ENCODE measurements at regions of chr12 and their contacts with region 1.

Region 1: DNA sequence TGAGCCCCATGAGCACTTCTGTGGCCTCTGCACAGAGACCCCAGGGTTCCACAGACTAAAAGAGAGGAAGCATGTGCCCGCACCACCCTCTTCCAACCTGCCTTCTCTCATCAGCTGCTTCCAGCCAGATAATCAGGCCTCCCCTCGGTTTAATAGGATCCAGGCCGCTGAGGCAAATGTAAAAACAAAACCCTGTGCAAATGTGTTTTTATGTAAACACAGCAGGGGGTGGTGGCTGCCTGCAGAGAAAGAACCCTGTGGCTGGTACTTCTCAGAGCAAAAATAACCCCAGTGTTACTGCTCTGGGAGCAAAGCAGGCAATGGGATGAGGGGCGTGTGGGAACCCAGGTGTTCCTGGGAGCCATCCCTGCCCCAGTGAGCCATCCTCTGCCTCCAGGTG is 46.2 kb downstream of the WSCD2 start:
- DNase-seq: no peak

Region 2: GRCh38 chr12:108562348-108563135 is 387.2 kb after region 1 on chr12 and contains the start of gene ISCU:
- intact Hi-C with region 1: no loop called
- DNase-seq: peak; percentile 100
- total RNA-seq, gene ISCU: 113 to 119 TPM

Region 3: DNA sequence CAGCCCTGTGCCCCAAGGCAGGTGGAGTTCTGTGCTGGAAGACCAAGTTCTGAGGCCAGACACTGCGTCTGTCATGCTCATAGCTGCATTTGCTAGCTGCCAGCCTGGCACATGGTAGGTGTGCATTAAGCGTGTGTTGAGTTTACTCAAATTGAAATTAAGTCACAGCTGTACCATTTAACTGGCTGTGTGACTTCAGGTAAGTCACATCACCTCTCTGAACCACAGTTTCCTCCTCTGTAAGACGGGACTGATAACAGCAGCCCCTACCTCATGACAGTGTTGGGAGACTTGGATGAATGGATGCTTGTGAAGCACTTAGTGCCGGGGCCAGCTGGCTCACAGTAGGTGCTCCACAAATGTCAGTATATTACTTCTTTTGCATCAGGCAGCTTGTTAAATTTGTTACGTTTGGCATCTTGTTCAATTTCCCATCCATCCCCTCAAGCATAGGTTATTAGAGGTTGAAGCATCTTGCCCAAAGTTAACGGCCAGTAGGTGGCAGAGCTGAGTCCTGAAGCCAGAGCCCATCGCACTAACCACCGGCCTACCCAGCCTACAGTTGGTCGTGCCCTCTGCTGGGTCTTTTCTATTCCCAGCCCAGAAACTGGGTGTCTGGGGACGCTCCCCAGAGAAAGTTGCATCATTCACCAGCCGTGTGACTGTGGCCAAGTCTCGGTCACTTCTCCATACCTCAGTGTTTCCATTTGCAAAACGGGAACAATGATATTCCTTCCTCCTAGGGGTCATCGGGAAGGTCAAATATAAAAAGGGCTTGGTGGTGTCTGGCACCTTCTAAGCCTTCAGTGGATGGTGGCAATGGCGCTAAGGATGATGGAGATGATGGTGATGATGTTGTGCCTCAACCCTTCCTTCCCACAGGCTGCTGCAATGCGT is 709.1 kb after region 1 on chr12:
- intact Hi-C with region 1: loop called in 1 of 2 experiments (anchors 5 kb)
- DNase-seq: no peak